Dorsolateral prefrontal cortex (tissue), 120 donors: ENCODE measurements at regions of chr7 and their contacts with region 1.

Region 1: DNA sequence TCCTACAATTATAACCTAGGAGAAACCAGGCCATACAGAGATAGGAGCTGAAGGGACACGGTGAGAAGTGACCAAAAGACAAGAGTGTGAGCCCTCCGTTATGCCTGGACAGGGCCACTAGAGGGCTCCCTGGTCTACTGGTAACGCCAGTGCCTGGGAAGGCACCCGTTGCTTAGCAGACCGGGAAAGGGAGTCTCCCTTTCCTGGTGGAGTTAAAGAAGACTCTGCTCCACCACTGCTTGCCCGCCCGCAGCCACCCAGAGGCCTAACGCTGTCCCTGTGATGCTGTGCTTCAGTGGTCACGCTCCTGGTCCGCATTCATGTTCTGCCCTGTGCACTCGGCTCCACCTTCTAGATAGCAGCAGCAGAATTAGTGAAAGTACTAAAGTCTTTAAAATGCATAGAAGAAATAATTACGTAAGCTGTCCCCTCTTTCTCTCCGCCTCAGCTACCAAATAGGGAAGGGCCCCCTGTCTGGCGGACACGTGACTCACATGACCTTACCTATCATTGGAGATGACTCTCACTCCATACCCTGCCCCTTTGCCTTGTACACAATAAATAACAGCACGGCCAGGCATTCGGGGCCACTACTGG is 34.8 kb downstream of the GRID2IP start:
- DNase-seq: peak; percentile 66 to 90 (median 85)
- H3K4me3 ChIP-seq: peak overlapping the region in 57 of 59 donors; percentile 11 to 64 (median 43)
- H3K27ac ChIP-seq: peak overlapping the region in 21 of 59 donors; percentile 7 to 71 (median 43)
- H3K27me3 ChIP-seq: peaks cover 0 to 3% (median 0%) of the 10 kb centered on the region in 45 donors
- CTCF ChIP-seq: peak; percentile 57 to 93 (median 84)

Region 2: GRCh38 chr7:6577365-6578113 is 61.1 kb after region 1 on chr7 and contains the start of gene ZDHHC4:
- intact Hi-C with region 1: loop called (anchors 5 kb)
- DNase-seq: peak; percentile 74 to 93 (median 88)
- H3K4me3 ChIP-seq: peak within 1 kb of the TSS; percentile 68 to 95 (median 85)
- H3K27ac ChIP-seq: peak within 1 kb of the TSS; percentile 7 to 98 (median 93)
- H3K27me3 ChIP-seq: no peaks in the 10 kb centered on the region
- CTCF ChIP-seq: peak in 38 of 56 donors; percentile 1 to 59 (median 35)
- total RNA-seq, gene ZDHHC4: 30.5 to 60.4 (median 41.9) TPM

Region 3: GRCh38 chr7:6651851-6652445 is 135.5 kb after region 1 on chr7:
- intact Hi-C with region 1: no loop called
- DNase-seq: peak in 4 of 10 donors; percentile 23 to 38 (median 31)
- H3K4me3 ChIP-seq: no peak overlapping the region
- H3K27ac ChIP-seq: no peak overlapping the region
- H3K27me3 ChIP-seq: no peaks in the 10 kb centered on the region
- CTCF ChIP-seq: no peak